Mammary epithelial cell (primary cell): ENCODE measurements at regions of chr5 and their contacts with region 1.

Region 1: GRCh38 chr5:442335-443238 is at the start of gene EXOC3:
- DNase-seq: peak; percentile 65
- H3K4me3 ChIP-seq: peak within 1 kb of the TSS; percentile 75 to 79 (median 79)
- H3K27ac ChIP-seq: peak within 1 kb of the TSS; percentile 57
- H3K4me1 ChIP-seq: peaks cover 17% of the 10 kb centered on the region
- H3K27me3 ChIP-seq: no peaks in the 10 kb centered on the region
- CTCF ChIP-seq: no peak
- total RNA-seq, gene EXOC3: 19.5 to 41.2 TPM

Region 2: GRCh38 chr5:392431-392988 is 50.1 kb before region 1 on chr5:
- CTCF ChIA-PET with region 1: no interaction called
- dilution Hi-C with region 1: loop called (anchors 5 kb)
- in situ Hi-C with region 1: no loop called
- intact Hi-C with region 1: no loop called
- DNase-seq: peak; percentile 48
- H3K4me3 ChIP-seq: no peak overlapping the region
- H3K27ac ChIP-seq: no peak overlapping the region
- H3K4me1 ChIP-seq: no peaks in the 10 kb centered on the region
- H3K27me3 ChIP-seq: peaks cover 1% of the 10 kb centered on the region
- CTCF ChIP-seq: no peak

Region 3: DNA sequence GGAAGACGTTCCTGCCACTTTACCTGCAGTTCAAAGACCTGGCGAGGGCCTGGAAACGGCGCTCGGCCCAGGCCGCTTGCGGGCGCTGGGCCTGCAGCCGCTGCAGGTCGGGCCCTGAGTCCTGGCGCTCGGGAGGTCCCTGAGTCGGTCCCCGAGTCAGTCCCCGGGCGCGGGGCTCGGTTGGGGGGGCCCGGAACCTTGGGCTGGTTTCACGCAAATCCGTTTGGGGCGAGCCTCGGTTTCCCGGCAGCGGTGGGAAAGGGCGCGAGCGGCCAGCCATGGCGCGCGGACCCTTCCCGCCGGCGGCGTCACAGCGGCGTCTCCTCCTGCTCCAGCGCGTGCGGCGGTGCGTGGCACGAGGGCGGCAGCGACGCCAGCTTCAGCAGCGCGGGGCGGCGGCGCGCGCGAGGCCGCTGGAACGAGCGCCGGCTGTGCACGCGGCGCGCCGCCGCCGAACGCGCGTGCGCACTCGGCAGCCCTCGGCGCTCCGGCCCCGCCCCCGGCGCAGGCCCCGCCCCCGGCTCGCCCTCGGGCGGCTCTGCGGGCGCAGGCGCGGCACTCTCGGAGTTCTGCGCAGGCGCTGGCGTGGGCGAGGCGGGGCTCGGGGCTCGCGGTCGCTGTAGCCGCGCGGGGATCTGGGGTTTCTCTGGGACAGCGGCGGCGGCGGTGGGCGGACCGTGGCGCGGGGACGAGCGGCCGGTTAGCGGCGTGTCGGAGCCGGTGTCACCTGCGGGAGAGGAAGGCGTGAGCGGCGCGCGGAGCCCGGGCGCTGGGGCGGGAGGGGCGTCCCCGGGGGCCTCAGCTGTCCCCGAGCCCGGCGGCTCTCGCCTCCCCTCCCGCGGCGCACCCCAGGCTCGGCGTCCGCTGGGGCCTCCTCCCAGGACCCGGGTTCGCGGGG is 30.3 kb after region 1 on chr5:
- CTCF ChIA-PET with region 1: interaction called, 6 read pairs
- dilution Hi-C with region 1: no loop called
- in situ Hi-C with region 1: no loop called
- intact Hi-C with region 1: loop called (anchors 2 kb)
- DNase-seq: peak; percentile 66
- H3K4me3 ChIP-seq: peak overlapping the region; percentile 69 to 94 (median 73)
- H3K27ac ChIP-seq: peak overlapping the region; percentile 32
- H3K4me1 ChIP-seq: peaks cover 31% of the 10 kb centered on the region
- H3K27me3 ChIP-seq: no peaks in the 10 kb centered on the region
- CTCF ChIP-seq: no peak

Region 4: GRCh38 chr5:502325-503079 is 59.9 kb after region 1 on chr5:
- CTCF ChIA-PET with region 1: no interaction called
- dilution Hi-C with region 1: loop called (anchors 5 kb)
- in situ Hi-C with region 1: no loop called
- intact Hi-C with region 1: no loop called
- DNase-seq: no peak
- H3K4me3 ChIP-seq: no peak overlapping the region
- H3K27ac ChIP-seq: no peak overlapping the region
- H3K4me1 ChIP-seq: no peaks in the 10 kb centered on the region
- H3K27me3 ChIP-seq: peaks cover 7% of the 10 kb centered on the region
- CTCF ChIP-seq: no peak

Region 5: GRCh38 chr5:626850-627249 is 184.3 kb after region 1 on chr5:
- CTCF ChIA-PET with region 1: no interaction called
- dilution Hi-C with region 1: no loop called
- in situ Hi-C with region 1: no loop called
- intact Hi-C with region 1: loop called (anchors 5 kb)
- DNase-seq: no peak
- H3K4me3 ChIP-seq: no peak overlapping the region
- H3K27ac ChIP-seq: no peak overlapping the region
- H3K4me1 ChIP-seq: no peaks in the 10 kb centered on the region
- H3K27me3 ChIP-seq: no peaks in the 10 kb centered on the region
- CTCF ChIP-seq: no peak

Region 6: DNA sequence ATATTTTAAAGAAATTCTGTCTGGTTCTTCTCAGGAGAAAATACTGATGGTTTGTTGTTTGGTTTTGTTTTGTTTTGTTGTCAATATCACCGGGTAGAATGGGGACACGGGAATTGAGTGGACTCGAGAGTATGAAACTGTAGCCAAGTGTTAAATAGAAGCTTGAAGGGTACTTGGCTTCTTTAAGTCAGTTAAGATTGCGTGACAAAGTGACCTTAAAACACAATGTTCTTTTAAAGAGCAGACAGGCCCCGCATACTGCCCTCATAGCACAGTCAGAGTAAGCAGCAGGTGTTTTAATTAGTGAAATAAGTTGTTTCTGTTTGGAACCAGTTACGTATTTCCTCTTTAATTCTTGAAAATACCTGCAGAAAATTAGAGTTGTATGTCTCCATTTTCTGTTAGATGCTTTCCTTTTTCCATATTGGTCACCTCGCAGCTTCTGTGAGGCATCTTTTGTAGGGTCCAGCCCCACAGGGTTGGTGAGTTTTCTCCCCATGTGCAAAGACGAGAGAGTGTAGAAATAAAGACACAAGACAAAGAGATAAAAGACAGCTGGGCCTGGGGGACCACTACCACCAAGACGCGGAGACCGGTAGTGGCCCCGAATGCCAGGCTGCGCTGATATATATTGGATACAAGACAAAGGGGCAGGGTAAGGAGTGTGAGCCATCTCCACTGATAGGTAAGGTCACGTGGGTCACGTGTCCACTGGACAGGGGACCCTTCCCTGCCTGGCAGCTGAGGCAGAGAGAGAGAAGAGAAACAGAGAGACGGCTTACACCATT is 459.7 kb after region 1 on chr5:
- CTCF ChIA-PET with region 1: no interaction called
- dilution Hi-C with region 1: no loop called
- in situ Hi-C with region 1: no loop called
- intact Hi-C with region 1: loop called (anchors 2 kb)
- DNase-seq: no peak
- H3K4me3 ChIP-seq: no peak overlapping the region
- H3K27ac ChIP-seq: no peak overlapping the region
- H3K4me1 ChIP-seq: no peaks in the 10 kb centered on the region
- H3K27me3 ChIP-seq: no peaks in the 10 kb centered on the region
- CTCF ChIP-seq: no peak